HepG2 (cell line): ENCODE measurements at regions of chr4 and their contacts with region 1.

Region 1: DNA sequence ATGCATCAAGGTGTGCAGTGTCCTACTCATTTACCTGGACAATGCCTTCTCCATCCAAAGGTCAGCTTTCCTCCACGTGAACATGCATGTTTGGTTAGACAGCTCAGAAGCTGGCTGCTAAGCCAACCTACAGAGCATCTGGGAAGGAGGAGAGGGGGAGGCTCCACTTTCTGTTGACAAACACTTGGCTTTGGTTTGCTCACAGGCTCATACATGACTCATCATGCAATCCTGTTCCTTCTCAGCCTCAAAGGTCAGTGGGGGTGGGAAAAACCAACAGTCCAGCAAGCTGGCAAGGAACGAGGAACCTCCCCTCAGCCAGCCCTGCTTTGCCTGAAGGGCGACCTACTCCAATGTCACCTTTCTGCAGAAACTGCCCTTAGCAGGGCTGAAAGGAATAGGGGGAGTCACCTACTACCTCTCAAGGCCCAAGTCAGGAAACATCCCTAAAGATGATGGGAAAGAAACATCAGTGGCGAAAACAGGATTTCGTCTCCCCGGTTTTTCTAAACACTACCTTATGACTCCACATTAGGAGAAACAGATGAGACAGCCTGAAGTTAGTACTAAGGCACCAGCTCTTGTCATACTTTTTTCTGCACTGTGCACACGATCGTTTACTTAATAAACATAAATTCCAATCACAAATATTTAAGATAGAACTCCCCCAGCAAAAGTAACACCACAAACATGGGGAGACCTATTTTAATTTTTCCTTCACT is 37.9 kb downstream of the RELL1 start:
- DNase-seq: peak; percentile 92
- ATAC-seq: peak; percentile 95
- H3K4me3 ChIP-seq: peak overlapping the region in 1 of 3 experiments; percentile 11; a peak in 1 of 6 replicates
- H3K27ac ChIP-seq: peak overlapping the region; percentile 65
- H3K4me1 ChIP-seq: peaks cover 49% of the 10 kb centered on the region
- H3K27me3 ChIP-seq: no peaks in the 10 kb centered on the region
- CTCF ChIP-seq: no peak
- EP300 ChIP-seq: peak in 1 of 2 experiments; percentile 91; a peak in 2 of 4 replicates
- POLR2A ChIP-seq: no peak
- RAD21 ChIP-seq: no peak; the same call in 1 of the 2 replicates

Region 2: DNA sequence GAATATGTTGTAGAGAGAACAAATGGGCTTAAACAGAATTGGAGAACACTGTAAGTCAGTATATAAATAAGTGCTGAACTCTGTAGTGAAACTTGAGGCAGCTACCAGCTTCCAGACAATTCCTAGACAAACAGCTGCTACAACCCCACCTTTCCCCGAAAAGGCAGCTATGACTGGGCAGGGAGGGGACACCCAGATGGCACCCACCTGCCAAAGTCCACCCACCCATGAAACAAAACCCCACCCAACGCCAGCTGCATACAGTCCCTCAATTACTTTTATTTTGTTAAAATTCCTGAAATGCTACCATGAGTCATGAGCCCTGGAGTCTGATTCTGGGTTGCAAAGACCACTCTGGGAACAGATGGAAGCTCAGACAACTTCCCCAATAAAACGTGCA is 13.5 kb after region 1 on chr4:
- CTCF ChIA-PET with region 1: no interaction called
- POLR2A ChIA-PET with region 1: interaction called, 28 read pairs
- in situ Hi-C with region 1: no loop called
- intact Hi-C with region 1: loop called (anchors 1 kb)
- DNase-seq: no peak
- ATAC-seq: no peak
- H3K4me3 ChIP-seq: no peak overlapping the region
- H3K27ac ChIP-seq: peak overlapping the region; percentile 83
- H3K4me1 ChIP-seq: peaks cover 92% of the 10 kb centered on the region
- H3K27me3 ChIP-seq: no peaks in the 10 kb centered on the region
- CTCF ChIP-seq: no peak
- EP300 ChIP-seq: no peak
- POLR2A ChIP-seq: no peak
- RAD21 ChIP-seq: no peak

Region 3: DNA sequence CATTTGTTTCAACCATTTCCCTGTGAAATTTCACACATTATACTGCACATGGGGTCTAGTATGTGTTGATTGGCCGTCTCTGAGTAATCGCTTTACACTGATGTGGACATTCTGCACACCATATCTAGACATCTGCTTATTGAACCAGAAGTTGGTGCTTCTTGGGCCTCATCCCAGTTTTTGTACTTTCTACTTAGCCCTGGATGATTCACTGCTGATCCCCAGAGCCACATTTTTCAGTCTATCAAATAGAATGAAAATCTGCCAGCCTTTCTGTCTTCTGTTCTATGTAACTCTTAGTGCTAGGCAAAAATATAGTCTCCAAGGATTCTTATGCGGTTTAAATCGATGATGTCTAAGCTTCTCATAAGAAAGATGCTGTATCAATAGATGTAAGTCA is 78.4 kb after region 1 on chr4:
- CTCF ChIA-PET with region 1: no interaction called
- POLR2A ChIA-PET with region 1: interaction called, 5 read pairs
- in situ Hi-C with region 1: no loop called
- intact Hi-C with region 1: loop called (anchors 5 kb)
- DNase-seq: no peak
- ATAC-seq: no peak
- H3K4me3 ChIP-seq: no peak overlapping the region
- H3K27ac ChIP-seq: peak overlapping the region; percentile 11
- H3K4me1 ChIP-seq: peaks cover 66% of the 10 kb centered on the region
- H3K27me3 ChIP-seq: no peaks in the 10 kb centered on the region
- CTCF ChIP-seq: no peak
- EP300 ChIP-seq: no peak
- POLR2A ChIP-seq: no peak
- RAD21 ChIP-seq: no peak